GM10248 (cell line): ENCODE measurements at regions of chr9 and their contacts with region 1.

Region 1: DNA sequence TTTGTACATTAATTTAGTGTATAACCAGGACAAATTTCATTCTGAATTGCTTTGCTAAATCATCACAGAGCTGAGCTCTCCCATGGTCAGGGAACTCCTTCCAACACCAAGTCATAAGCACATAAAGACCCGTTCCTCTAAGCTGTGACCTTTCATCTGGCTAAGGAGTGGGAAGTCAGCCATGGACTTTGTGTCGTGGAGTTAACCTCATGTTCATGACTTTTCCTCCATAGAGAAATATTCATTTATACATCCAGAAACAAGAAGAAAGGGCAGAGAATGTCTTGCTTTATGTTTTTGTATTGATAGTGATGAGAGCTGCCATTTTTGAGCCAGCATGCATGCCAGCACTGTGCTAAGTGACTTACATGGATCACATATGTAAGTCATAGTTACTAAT is 97.5 kb downstream of the INIP start:
- DNase-seq: no peak
- CTCF ChIP-seq: no peak

Region 2: GRCh38 chr9:112605963-112606699 is 14.3 kb before region 1 on chr9:
- CTCF ChIA-PET with region 1: interaction called, 13 read pairs
- POLR2A ChIA-PET with region 1: interaction called, 4 read pairs
- DNase-seq: no peak
- CTCF ChIP-seq: no peak

Region 3: GRCh38 chr9:112784020-112784781 is 163.8 kb after region 1 on chr9:
- CTCF ChIA-PET with region 1: no interaction called
- POLR2A ChIA-PET with region 1: no interaction called
- DNase-seq: no peak
- CTCF ChIP-seq: no peak

Region 4: DNA sequence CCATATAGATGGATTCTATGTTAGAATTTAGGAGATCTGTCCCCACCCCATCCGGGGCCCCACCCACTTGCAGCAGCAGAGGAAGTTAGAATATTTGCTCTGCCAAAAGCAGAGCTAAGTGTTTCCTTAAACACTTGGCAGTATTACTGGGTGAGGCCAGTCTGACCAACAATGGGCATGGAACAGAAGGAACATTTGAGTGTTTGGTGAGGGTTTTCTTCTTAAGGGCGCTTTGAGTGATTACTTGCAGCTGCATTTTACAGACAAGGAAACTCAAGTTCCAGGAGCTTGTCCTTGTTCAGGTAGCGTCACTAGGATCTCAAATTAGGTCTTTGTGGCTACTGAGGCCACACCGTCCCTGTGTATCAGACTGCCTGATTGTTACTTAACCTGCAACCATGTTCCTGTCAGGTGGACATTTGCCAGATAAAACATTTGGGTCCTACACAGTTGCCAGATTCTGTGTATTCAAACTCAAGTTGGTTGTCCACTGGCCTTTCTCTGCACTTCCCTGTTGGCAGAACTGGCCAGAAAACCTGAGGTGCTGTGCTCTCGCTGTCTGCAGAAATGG is 211.0 kb after region 1 on chr9:
- CTCF ChIA-PET with region 1: no interaction called
- POLR2A ChIA-PET with region 1: no interaction called
- DNase-seq: no peak
- CTCF ChIP-seq: no peak

Region 5: DNA sequence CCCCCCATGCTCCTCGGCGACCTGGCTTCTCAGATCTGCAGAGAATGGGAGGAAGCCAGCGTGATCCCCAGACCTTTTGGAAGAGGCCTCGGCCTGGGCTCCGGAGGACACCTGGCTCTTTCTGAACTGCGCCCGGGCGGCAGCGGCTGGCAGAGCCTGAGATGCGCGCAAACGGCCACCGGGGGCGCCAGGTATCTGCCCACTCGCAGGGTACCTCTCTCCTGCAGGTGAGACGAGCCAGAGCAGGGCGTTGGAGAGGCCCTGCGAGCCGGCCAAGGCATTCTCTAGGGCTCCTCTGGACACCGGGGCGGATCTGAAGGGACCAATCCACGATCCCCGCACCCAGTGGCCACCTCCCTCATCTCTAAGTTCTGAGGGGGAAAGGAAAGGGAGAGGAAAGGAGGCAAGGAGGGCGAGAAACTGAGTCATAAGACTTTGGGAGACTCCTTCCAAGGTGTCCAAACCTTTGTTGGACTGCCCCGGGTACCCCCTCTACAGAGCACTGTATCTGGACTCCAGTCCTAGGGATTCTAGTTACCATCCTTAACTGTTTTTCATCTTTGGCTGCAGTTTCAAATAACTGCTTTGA is 325.3 kb after region 1 on chr9:
- CTCF ChIA-PET with region 1: no interaction called
- POLR2A ChIA-PET with region 1: no interaction called
- DNase-seq: no peak
- CTCF ChIP-seq: no peak